ENCODE measurements at regions of chr10 and their contacts with region 1.

Region 1: GRCh38 chr10:72048450-72049124 is 39.8 kb downstream of the SPOCK2 start:
- DNase-seq: peak; percentile 94
- H3K4me3 ChIP-seq: no peak overlapping the region
- H3K27ac ChIP-seq: no peak overlapping the region
- H3K4me1 ChIP-seq: peaks cover 0 to 14% (median 8%) of the 10 kb centered on the region in 6 donors
- H3K27me3 ChIP-seq: no peaks in the 10 kb centered on the region
- CTCF ChIP-seq: peak; percentile 98 to 99 (median 99)
- POLR2A ChIP-seq: no peak

Region 2: GRCh38 chr10:71899665-71900412 is 148.7 kb before region 1 on chr10:
- intact Hi-C with region 1: loop called (anchors 5 kb)
- DNase-seq: no peak
- H3K4me3 ChIP-seq: no peak overlapping the region
- H3K27ac ChIP-seq: no peak overlapping the region
- H3K4me1 ChIP-seq: peaks cover 0 to 16% (median 8%) of the 10 kb centered on the region in 6 donors
- H3K27me3 ChIP-seq: no peaks in the 10 kb centered on the region
- CTCF ChIP-seq: no peak
- POLR2A ChIP-seq: no peak

Region 3: DNA sequence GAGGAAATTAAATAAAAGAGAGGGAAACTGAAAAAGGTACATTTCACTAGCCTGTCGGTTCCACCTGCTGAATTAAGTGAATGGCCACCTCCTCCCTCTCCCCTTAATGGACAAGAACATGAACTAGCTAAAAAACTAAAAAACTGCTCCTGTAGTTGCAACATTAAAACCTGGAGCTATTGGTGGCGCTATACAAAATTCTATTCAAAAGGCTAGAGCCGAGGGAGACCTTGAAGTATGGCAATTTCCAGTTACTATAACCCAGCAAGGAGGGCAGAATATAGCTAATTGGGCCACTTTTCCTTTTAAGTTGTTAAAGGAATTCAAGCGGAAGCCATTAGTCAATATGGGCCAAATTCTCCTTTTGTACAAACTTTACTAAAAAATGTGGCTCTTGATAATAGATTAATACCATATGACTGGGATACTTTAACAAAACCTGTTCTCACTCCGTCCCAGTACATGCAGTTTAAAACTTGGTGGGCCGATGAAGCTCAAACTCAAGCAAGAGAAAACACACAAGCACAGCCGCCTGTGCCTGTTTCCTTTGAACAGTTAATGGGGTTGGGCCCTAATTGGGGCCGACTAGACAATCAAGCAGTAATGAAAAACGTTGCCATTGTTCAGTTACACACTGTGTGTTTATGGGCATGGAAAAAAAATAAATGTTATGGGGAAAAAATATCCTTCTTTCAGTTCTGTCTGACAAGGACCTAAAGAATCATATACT is 90.9 kb before region 1 on chr10:
- intact Hi-C with region 1: loop called (anchors 2 kb)
- DNase-seq: no peak
- H3K4me3 ChIP-seq: no peak overlapping the region
- H3K27ac ChIP-seq: no peak overlapping the region
- H3K4me1 ChIP-seq: peaks cover 0 to 7% (median 2%) of the 10 kb centered on the region in 6 donors
- H3K27me3 ChIP-seq: peaks cover 0 to 19% (median 0%) of the 10 kb centered on the region in 7 donors
- CTCF ChIP-seq: no peak
- POLR2A ChIP-seq: no peak

Region 4: DNA sequence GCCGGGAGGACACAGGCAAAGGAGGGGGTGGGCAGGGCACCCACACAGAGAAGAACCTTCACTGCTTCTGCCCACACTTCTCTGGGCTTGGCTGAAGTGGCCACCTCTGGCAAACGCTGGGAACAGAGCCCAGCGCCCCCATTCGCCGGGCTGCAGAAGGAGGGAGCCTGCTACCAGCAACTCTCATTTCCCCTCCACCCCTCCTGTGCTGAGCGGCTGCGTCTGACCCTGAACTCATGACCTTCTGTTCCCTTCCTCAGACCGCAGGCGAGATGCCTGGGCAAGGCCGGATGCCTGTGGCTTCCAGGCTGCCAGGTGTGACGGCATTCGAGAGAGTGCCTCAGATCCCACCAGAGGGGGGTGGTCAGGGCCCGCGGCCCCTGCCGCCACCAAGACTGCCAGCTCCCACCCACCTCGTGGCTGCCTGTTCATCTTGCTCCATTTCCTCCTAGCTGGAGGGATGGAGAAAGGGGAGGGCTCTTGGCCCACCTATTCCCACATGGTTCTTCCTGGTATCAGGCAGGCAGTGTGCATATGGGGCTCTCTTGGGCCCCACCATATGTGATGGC is 286.3 kb after region 1 on chr10:
- intact Hi-C with region 1: loop called (anchors 5 kb)
- DNase-seq: peak; percentile 99
- H3K4me3 ChIP-seq: peak overlapping the region in 5 of 8 donors; percentile 2 to 57 (median 7)
- H3K27ac ChIP-seq: peak overlapping the region; percentile 84 to 98 (median 95)
- H3K4me1 ChIP-seq: peaks cover 68 to 82% (median 78%) of the 10 kb centered on the region in 6 donors
- H3K27me3 ChIP-seq: no peaks in the 10 kb centered on the region
- CTCF ChIP-seq: peak in 10 of 11 experiments; percentile 5 to 56 (median 40)
- POLR2A ChIP-seq: peak in 1 of 3 donors; percentile 17

Measured in spleen (tissue), 13 donors.